ENCODE measurements at regions of chr15 and their contacts with region 1.

Region 1: GRCh38 chr15:38817427-38818156 is 253.0 kb upstream of the RASGRP1 start:
- DNase-seq: peak; percentile 81
- H3K4me3 ChIP-seq: no peak overlapping the region
- H3K27ac ChIP-seq: no peak overlapping the region
- H3K4me1 ChIP-seq: peaks cover 6% of the 10 kb centered on the region
- H3K27me3 ChIP-seq: no peaks in the 10 kb centered on the region
- CTCF ChIP-seq: peak; percentile 99 to 100

Region 2: DNA sequence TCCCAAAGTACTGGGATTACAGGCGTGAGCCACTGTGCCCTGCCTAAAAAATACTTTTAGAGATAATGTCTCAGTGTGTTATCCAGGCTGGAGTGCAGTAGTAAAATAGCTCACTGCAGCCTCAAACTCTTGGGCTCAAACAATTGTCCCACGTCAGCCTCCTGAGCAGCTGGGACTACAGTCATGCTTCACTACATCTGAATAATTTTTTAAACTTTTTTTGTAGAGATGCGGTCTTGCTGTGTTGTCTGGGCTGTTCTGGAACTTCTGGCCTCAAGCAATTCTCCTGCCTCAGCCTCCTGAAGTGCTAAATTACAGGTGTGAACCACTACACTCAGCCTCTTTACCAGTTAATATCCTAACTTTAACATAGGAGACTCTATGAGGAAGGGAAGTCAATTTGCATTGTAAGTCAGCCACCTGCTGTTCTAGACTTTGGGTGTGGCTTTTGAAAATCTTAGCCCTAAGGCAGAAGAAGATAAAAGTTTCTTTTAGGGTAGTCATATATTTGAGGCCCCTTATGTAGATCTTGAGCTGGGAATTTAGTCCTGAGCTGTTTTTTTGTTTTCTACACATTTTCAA is 174.8 kb before region 1 on chr15:
- CTCF ChIA-PET with region 1: no interaction called
- dilution Hi-C with region 1: no loop called
- in situ Hi-C with region 1: no loop called
- intact Hi-C with region 1: no loop called
- DNase-seq: no peak
- H3K4me3 ChIP-seq: no peak overlapping the region
- H3K27ac ChIP-seq: no peak overlapping the region
- H3K4me1 ChIP-seq: peaks cover 6% of the 10 kb centered on the region
- H3K27me3 ChIP-seq: no peaks in the 10 kb centered on the region
- CTCF ChIP-seq: no peak

Region 3: DNA sequence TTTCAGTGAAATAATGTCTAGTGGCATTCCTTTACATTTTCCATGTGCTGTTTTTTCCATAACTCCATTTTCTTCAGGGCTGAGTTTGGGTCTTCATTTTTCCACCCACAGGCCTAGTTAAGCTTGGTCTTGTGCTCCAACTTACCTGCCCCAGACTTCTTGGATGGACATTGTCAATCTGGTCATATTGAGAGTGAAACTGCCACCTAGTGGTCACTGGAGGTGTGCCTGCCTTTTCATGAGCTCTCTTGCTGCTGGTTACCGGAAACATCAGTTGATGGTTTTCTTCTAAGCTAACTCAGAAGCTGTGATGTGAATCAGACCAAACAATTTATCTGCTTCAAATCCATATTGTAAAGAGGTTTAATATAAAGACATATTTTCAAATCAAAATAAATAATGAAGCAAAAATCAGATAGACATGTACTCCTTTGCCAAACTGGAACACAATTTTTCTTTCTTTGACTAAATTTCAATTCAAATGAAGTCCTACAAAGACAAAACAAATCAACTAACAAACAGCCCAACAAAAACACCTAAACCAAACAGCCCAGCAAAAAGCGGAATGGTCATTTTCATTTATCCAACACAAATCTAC is 117.9 kb before region 1 on chr15:
- CTCF ChIA-PET with region 1: no interaction called
- dilution Hi-C with region 1: loop called (anchors 10 kb)
- in situ Hi-C with region 1: no loop called
- intact Hi-C with region 1: no loop called
- DNase-seq: peak; percentile 45
- H3K4me3 ChIP-seq: no peak overlapping the region
- H3K27ac ChIP-seq: no peak overlapping the region
- H3K4me1 ChIP-seq: peaks cover 6% of the 10 kb centered on the region
- H3K27me3 ChIP-seq: no peaks in the 10 kb centered on the region
- CTCF ChIP-seq: peak; percentile 91 to 94

Region 4: DNA sequence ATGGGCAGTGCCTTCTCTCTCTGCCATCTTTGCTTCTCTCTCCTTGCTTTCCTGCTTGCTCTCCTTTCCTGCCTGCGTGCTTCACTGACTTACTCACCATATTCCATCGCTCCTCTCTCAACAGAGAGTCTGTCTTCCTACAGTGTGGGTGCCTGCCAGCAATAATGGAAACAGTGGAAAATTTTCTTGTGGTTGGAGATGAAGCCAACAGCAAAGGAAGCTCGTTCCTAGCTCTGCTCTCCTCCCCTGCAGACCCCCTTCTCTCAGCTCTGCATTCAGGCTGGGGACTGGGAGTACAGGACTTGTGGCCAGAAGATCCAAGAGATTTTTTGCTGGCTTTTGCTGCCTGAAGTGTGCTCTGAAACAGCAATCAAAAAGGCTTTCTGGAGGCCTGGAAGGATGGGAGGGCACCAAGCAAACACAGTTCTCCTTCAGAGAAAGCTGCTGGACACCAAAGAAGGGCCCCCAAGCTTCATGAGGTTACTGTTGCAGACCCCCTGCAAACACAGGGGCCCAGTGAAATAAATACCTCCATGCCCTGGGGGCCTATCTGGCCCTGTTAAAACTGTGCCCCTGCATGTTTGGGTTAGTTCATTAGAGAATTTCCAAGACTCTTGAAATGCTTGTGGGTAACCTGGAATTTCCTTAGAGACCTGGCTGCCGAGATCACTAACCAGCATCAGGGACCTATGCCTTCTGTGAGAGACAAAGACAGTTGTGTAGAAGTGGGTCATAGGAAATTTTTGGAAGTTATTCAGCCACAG is 103.1 kb before region 1 on chr15:
- CTCF ChIA-PET with region 1: no interaction called
- dilution Hi-C with region 1: loop called (anchors 5 kb)
- in situ Hi-C with region 1: no loop called
- intact Hi-C with region 1: no loop called
- DNase-seq: peak; percentile 94
- H3K4me3 ChIP-seq: no peak overlapping the region
- H3K27ac ChIP-seq: peak overlapping the region; percentile 95
- H3K4me1 ChIP-seq: peaks cover 27% of the 10 kb centered on the region
- H3K27me3 ChIP-seq: no peaks in the 10 kb centered on the region
- CTCF ChIP-seq: no peak

Region 5: GRCh38 chr15:38941399-38941953 is 123.9 kb after region 1 on chr15:
- CTCF ChIA-PET with region 1: no interaction called
- dilution Hi-C with region 1: no loop called
- in situ Hi-C with region 1: no loop called
- intact Hi-C with region 1: no loop called
- DNase-seq: peak; percentile 31
- H3K4me3 ChIP-seq: no peak overlapping the region
- H3K27ac ChIP-seq: no peak overlapping the region
- H3K4me1 ChIP-seq: no peaks in the 10 kb centered on the region
- H3K27me3 ChIP-seq: no peaks in the 10 kb centered on the region
- CTCF ChIP-seq: no peak

Region 6: DNA sequence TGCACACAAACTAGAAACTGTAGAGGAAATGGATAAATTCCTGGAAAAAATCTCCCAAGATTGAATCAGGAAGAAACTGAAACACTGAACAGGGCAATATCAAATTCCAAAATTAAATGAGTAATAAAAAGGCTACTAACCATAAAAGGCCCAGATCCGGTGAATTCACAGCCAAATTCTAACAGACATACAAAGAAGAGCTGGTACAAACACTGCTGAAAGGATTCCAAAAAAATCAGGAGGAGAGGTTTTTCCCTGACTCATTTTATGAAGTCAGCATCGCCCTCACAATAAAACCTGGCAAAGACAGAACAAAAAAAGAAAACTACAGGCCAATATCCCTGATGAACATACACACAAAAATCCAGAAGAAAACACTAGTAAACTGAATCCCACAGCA is 300.9 kb after region 1 on chr15:
- CTCF ChIA-PET with region 1: no interaction called
- dilution Hi-C with region 1: no loop called
- in situ Hi-C with region 1: no loop called
- intact Hi-C with region 1: loop called (anchors 1 kb)
- DNase-seq: peak; percentile 85
- H3K4me3 ChIP-seq: no peak overlapping the region
- H3K27ac ChIP-seq: peak overlapping the region; percentile 43
- H3K4me1 ChIP-seq: peaks cover 31% of the 10 kb centered on the region
- H3K27me3 ChIP-seq: no peaks in the 10 kb centered on the region
- CTCF ChIP-seq: no peak

Region 7: GRCh38 chr15:39573844-39574243 is 756.3 kb after region 1 on chr15:
- CTCF ChIA-PET with region 1: no interaction called
- dilution Hi-C with region 1: loop called (anchors 5 kb)
- in situ Hi-C with region 1: no loop called
- intact Hi-C with region 1: no loop called
- DNase-seq: no peak
- H3K4me3 ChIP-seq: no peak overlapping the region
- H3K27ac ChIP-seq: no peak overlapping the region
- H3K4me1 ChIP-seq: peaks cover 6% of the 10 kb centered on the region
- H3K27me3 ChIP-seq: no peaks in the 10 kb centered on the region
- CTCF ChIP-seq: no peak